ENCODE measurements at regions of chr6 and their contacts with region 1.

Region 1: DNA sequence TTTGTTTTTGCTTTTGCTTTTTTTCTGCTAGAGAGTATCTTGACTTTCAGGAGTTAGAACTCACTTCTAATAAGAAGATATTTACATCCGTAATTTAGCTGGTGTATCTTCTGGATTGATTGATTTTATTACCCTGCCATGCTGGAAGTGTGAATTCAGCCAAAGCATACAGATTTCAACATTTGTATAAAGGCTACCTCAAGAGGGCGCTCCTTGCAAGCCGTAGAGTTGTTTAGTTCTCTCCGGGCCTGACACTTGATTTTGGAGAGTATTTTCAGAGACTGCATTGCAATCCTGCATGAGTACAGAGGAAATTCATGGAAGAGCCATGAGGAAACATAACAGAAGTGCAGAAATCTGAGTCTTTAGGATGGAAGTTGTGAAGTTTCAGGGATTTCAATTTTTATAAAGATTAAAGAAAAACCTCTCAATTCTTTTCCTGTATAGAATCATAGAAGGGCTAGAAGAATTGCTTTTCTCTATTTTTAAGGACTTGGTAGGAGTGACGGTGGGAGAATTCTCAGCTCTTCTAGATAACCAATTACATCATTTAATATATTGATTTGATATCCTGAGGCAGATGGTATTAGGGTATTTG is 66.7 kb upstream of the TIAM2 start:
- DNase-seq: peak; percentile 42
- H3K4me3 ChIP-seq: no peak overlapping the region
- H3K27ac ChIP-seq: no peak overlapping the region
- H3K4me1 ChIP-seq: peaks cover 16% of the 10 kb centered on the region
- H3K27me3 ChIP-seq: no peaks in the 10 kb centered on the region
- CTCF ChIP-seq: peak; percentile 72 to 81

Region 2: DNA sequence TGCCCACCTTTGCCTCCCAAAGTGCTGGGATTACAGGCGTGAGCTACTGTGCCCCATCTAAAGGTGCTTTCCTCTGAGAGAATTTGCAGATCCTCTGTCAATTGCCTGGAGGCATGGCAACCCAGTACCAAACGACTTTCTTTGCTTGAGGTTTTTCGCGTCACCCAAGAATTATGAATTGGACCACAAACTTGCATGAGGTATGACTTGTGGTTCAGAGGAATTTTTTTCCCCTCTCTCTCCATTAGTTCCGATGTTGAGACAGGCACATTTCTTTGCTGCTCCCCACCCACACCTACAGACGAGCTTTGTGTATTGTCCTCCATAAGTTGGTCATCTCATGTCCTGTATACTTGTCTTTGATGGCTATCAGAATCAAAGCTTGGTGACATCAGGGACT is 207.0 kb before region 1 on chr6:
- CTCF ChIA-PET with region 1: no interaction called
- dilution Hi-C with region 1: no loop called
- in situ Hi-C with region 1: no loop called
- intact Hi-C with region 1: no loop called
- DNase-seq: peak; percentile 98
- H3K4me3 ChIP-seq: no peak overlapping the region
- H3K27ac ChIP-seq: peak overlapping the region; percentile 32
- H3K4me1 ChIP-seq: peaks cover 6% of the 10 kb centered on the region
- H3K27me3 ChIP-seq: peaks cover 7% of the 10 kb centered on the region
- CTCF ChIP-seq: no peak

Region 3: GRCh38 chr6:154852687-154853086 is 75.7 kb before region 1 on chr6:
- CTCF ChIA-PET with region 1: no interaction called
- dilution Hi-C with region 1: loop called (anchors 5 kb)
- in situ Hi-C with region 1: no loop called
- intact Hi-C with region 1: no loop called
- DNase-seq: no peak
- H3K4me3 ChIP-seq: no peak overlapping the region
- H3K27ac ChIP-seq: no peak overlapping the region
- H3K4me1 ChIP-seq: no peaks in the 10 kb centered on the region
- H3K27me3 ChIP-seq: no peaks in the 10 kb centered on the region
- CTCF ChIP-seq: no peak

Region 4: DNA sequence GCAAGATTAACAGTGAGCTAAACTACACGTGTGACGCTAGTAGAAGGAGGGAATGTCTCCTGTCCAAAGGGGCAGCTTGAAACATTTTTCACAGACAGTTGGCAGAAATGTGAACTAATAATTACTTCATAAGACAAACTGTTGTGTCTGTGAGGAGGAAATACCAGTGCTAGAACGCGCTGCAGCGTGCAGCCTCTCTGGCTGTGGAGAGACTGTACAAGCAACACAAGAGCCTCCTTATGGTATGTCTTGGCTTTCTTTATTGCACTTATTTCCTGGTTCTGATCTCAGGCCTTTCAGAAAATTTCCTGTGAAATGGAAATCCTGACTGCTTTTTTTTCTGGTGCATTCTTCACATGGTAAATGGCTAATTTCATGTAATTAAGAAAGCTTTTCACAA is 41.4 kb after region 1 on chr6:
- CTCF ChIA-PET with region 1: no interaction called
- dilution Hi-C with region 1: loop called (anchors 5 kb)
- in situ Hi-C with region 1: no loop called
- intact Hi-C with region 1: no loop called
- DNase-seq: peak; percentile 41
- H3K4me3 ChIP-seq: no peak overlapping the region
- H3K27ac ChIP-seq: no peak overlapping the region
- H3K4me1 ChIP-seq: no peaks in the 10 kb centered on the region
- H3K27me3 ChIP-seq: no peaks in the 10 kb centered on the region
- CTCF ChIP-seq: no peak

Region 5: DNA sequence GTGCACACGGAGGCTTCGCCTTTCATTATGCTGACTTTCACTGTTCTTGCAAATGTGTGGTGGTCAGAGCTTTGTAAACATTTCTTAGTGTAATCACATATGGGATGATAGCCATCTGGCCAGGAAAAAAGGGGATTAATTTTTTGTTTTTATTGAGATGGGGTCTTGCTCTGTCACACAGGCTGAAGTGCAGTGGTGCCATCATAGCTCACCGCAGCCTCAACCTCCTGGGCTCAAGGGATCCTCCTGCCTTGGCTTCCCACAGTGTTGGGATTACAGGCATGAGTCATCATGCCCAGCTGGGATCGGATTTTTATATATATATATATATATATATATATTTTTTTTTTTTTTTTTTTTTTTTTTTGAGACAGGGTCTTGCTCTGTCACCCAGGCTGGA is 55.7 kb after region 1 on chr6:
- CTCF ChIA-PET with region 1: no interaction called
- dilution Hi-C with region 1: no loop called
- in situ Hi-C with region 1: no loop called
- intact Hi-C with region 1: no loop called
- DNase-seq: no peak
- H3K4me3 ChIP-seq: no peak overlapping the region
- H3K27ac ChIP-seq: no peak overlapping the region
- H3K4me1 ChIP-seq: no peaks in the 10 kb centered on the region
- H3K27me3 ChIP-seq: no peaks in the 10 kb centered on the region
- CTCF ChIP-seq: no peak

Region 6: GRCh38 chr6:155248008-155249001 is 319.9 kb after region 1 on chr6:
- CTCF ChIA-PET with region 1: no interaction called
- dilution Hi-C with region 1: loop called (anchors 5 kb)
- in situ Hi-C with region 1: loop called (anchors 10 kb)
- intact Hi-C with region 1: loop called (anchors 2 kb)
- DNase-seq: peak; percentile 26
- H3K4me3 ChIP-seq: no peak overlapping the region
- H3K27ac ChIP-seq: no peak overlapping the region
- H3K4me1 ChIP-seq: peaks cover 6% of the 10 kb centered on the region
- H3K27me3 ChIP-seq: no peaks in the 10 kb centered on the region
- CTCF ChIP-seq: peak; percentile 59 to 82